Psoas muscle (tissue), 8 donors: ENCODE measurements at regions of chr3 and their contacts with region 1.

Region 1: GRCh38 chr3:88003115-88003755 is 55.6 kb downstream of the CGGBP1 start:
- DNase-seq: no peak
- ATAC-seq: no peak
- H3K4me3 ChIP-seq: no peak overlapping the region
- H3K27ac ChIP-seq: no peak overlapping the region
- H3K4me1 ChIP-seq: no peaks in the 10 kb centered on the region
- H3K27me3 ChIP-seq: no peaks in the 10 kb centered on the region
- CTCF ChIP-seq: peak; percentile 59

Region 2: DNA sequence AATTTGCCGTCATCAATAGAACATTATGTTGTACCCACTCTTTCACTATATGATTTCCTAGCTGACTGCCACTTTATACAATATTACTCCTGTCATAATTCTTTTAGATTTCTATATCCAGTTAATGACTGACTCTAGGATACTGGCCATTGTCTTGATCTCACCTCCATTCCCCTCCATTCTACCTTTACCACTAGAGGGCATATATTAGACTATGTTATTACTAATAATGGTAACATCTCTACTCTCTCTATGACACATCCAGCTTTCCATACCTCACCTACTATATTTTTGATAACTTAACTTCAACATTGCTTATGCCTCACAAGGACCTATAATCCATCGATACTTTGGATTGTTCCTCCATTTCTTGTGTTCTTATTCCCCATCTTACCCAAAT is 695.4 kb before region 1 on chr3:
- intact Hi-C with region 1: loop called in 1 of 2 experiments (anchors 10 kb)
- DNase-seq: no peak
- ATAC-seq: no peak
- H3K4me3 ChIP-seq: no peak overlapping the region
- H3K27ac ChIP-seq: no peak overlapping the region
- H3K4me1 ChIP-seq: no peaks in the 10 kb centered on the region
- H3K27me3 ChIP-seq: no peaks in the 10 kb centered on the region
- CTCF ChIP-seq: no peak

Region 3: DNA sequence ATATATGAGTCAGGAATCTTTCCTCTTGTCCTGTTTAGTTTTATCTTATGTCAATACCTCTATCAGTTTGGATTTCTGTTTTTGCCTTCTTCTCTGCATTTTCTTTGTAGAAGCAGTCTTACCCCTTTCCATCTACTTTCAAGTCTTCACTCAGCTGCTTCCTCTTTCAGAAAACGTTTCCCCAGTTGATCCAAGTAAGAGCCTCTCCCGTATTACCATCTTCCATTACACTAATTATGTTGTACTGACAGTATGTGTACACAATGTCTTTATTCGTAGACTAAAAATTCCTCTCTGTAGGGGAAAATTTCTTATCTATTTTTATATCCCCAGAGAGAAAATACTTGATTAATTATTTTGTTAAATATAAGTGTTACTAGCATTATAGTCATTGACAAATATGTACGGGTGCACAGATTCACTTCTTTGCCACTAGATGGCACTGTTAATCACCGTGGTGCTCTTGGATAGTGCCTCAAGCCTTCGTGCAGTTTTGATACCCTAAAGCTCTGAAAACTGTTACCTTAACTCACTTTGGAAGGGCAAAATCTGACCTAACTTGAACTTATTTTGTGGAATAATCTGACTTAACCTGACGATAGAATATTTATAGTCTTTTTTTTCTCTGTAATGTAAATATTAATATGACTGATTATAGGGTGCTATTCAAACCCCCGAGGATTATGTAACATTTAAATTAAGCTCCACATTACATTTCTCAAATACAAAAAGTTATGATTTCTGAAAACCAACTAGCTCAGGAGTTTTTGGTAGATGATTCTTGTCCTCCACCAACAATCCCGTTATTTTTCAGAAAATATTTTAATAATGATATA is 652.7 kb before region 1 on chr3:
- intact Hi-C with region 1: loop called (anchors 5 kb)
- DNase-seq: no peak
- ATAC-seq: peak; percentile 52 to 86 (median 76)
- H3K4me3 ChIP-seq: no peak overlapping the region
- H3K27ac ChIP-seq: no peak overlapping the region
- H3K4me1 ChIP-seq: no peaks in the 10 kb centered on the region
- H3K27me3 ChIP-seq: no peaks in the 10 kb centered on the region
- CTCF ChIP-seq: peak; percentile 88

Region 4: DNA sequence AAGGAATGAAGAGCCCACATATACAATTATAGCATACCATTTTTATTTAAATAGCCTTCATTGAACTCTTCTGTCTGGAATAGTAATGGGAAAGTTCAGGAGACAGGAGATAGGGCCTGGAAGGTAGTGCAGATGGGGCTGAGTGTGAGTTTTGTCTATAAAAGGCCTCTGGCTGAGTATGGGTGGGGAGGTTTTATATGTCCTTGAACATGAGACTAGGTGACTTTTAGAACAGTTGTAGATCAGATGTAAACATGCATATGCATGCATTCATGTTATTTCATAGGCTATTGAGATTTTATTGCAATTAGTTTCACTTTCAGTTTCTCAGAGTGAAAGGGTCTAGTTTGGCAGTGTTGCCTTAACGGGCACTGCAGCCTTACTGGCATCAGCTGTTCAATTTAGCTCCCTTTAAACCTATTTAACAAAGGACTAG is 28.4 kb after region 1 on chr3:
- intact Hi-C with region 1: no loop called
- DNase-seq: no peak
- ATAC-seq: peak in 2 of 4 donors; percentile 38 to 59
- H3K4me3 ChIP-seq: peak overlapping the region; percentile 67
- H3K27ac ChIP-seq: peak overlapping the region; percentile 51
- H3K4me1 ChIP-seq: peaks cover 3% of the 10 kb centered on the region
- H3K27me3 ChIP-seq: no peaks in the 10 kb centered on the region
- CTCF ChIP-seq: no peak

Region 5: DNA sequence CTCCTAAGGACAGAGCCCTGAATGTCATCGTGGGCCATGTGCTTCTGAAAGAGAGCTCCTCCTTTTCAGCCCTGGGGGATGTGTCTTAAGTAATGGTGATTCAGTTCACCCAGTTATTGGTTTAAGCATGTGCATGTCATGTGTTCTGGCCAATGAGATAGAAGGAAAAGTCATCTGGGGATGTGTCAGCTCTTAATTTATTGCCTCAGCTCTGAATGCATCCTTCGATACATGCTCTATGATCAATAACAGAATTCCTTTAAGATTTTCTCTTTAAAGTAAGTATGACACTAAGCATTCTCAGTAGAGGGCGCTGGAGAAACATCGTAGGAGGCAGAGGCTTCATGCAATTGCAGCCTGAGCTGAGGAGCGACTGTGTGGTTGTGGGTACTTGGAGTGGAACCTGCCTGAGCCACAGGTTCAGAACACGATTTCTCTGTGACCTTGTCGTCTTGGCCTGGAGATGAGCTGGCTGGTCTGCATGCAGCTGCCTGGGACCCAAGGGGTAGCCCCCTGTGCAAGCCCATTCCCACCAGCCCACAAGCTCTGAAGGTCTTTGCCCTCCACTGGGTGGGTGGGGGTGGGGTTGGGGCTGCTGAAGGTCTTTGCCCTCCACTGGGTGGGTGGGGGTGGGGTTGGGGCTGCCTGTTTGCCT is 216.0 kb after region 1 on chr3:
- intact Hi-C with region 1: no loop called
- DNase-seq: no peak
- ATAC-seq: no peak
- H3K4me3 ChIP-seq: no peak overlapping the region
- H3K27ac ChIP-seq: no peak overlapping the region
- H3K4me1 ChIP-seq: no peaks in the 10 kb centered on the region
- H3K27me3 ChIP-seq: no peaks in the 10 kb centered on the region
- CTCF ChIP-seq: no peak